CD4-positive, alpha-beta memory T cell (primary cell): ENCODE measurements at regions of chr15 and their contacts with region 1.

Region 1: GRCh38 chr15:60507596-60508424 is 28.9 kb upstream of the ICE2 start:
- DNase-seq: peak; percentile 66 to 79 (median 78)
- H3K4me3 ChIP-seq: no peak overlapping the region
- H3K4me3 Mint-ChIP-seq: peak overlapping the region in 6 of 8 donors; percentile 0 to 67 (median 28)
- H3K27ac ChIP-seq: peak overlapping the region; percentile 21
- H3K27ac Mint-ChIP-seq: peak overlapping the region; percentile 83 to 94 (median 91)
- H3K4me1 ChIP-seq: peaks cover 43% of the 10 kb centered on the region
- H3K4me1 Mint-ChIP-seq: peaks cover 29 to 55% (median 41%) of the 10 kb centered on the region in 4 donors
- H3K27me3 ChIP-seq: no peaks in the 10 kb centered on the region
- H3K27me3 Mint-ChIP-seq: no peaks in the 10 kb centered on the region

Region 2: GRCh38 chr15:59862191-59863155 is 645.3 kb before region 1 on chr15:
- CTCF ChIA-PET with region 1: no interaction called
- POLR2A ChIA-PET with region 1: no interaction called
- intact Hi-C with region 1: no loop called
- DNase-seq: no peak
- H3K4me3 ChIP-seq: no peak overlapping the region
- H3K4me3 Mint-ChIP-seq: no peak overlapping the region
- H3K27ac ChIP-seq: no peak overlapping the region
- H3K27ac Mint-ChIP-seq: no peak overlapping the region
- H3K4me1 ChIP-seq: no peaks in the 10 kb centered on the region
- H3K4me1 Mint-ChIP-seq: peaks cover 0 to 2% (median 0%) of the 10 kb centered on the region in 4 donors
- H3K27me3 ChIP-seq: no peaks in the 10 kb centered on the region
- H3K27me3 Mint-ChIP-seq: peaks cover 8% of the 10 kb centered on the region in 2 donors

Region 3: GRCh38 chr15:60362321-60363086 is 145.3 kb before region 1 on chr15:
- CTCF ChIA-PET with region 1: interaction called, 12 read pairs
- POLR2A ChIA-PET with region 1: no interaction called
- intact Hi-C with region 1: loop called (anchors 5 kb)
- DNase-seq: peak; percentile 3 to 49 (median 22)
- H3K4me3 ChIP-seq: no peak overlapping the region
- H3K4me3 Mint-ChIP-seq: peak overlapping the region in 1 of 8 donors; percentile 49
- H3K27ac ChIP-seq: no peak overlapping the region
- H3K27ac Mint-ChIP-seq: peak overlapping the region; percentile 17 to 87 (median 81)
- H3K4me1 ChIP-seq: peaks cover 25% of the 10 kb centered on the region
- H3K4me1 Mint-ChIP-seq: peaks cover 21 to 39% (median 29%) of the 10 kb centered on the region in 4 donors
- H3K27me3 ChIP-seq: no peaks in the 10 kb centered on the region
- H3K27me3 Mint-ChIP-seq: no peaks in the 10 kb centered on the region

Region 4: GRCh38 chr15:60649845-60650548 is 142.2 kb after region 1 on chr15:
- CTCF ChIA-PET with region 1: no interaction called
- POLR2A ChIA-PET with region 1: no interaction called
- intact Hi-C with region 1: loop called (anchors 5 kb)
- DNase-seq: peak; percentile 73 to 85 (median 81)
- H3K4me3 ChIP-seq: peak overlapping the region in 1 of 2 donors; percentile 46
- H3K4me3 Mint-ChIP-seq: peak overlapping the region; percentile 67 to 92 (median 85)
- H3K27ac ChIP-seq: peak overlapping the region; percentile 66
- H3K27ac Mint-ChIP-seq: peak overlapping the region; percentile 93 to 99 (median 97)
- H3K4me1 ChIP-seq: peaks cover 46% of the 10 kb centered on the region
- H3K4me1 Mint-ChIP-seq: peaks cover 36 to 55% (median 47%) of the 10 kb centered on the region in 4 donors
- H3K27me3 ChIP-seq: no peaks in the 10 kb centered on the region
- H3K27me3 Mint-ChIP-seq: no peaks in the 10 kb centered on the region

Region 5: GRCh38 chr15:60859996-60860494 is 352.2 kb after region 1 on chr15:
- CTCF ChIA-PET with region 1: interaction called, 20 read pairs
- POLR2A ChIA-PET with region 1: interaction called, 3 read pairs
- intact Hi-C with region 1: loop called (anchors 1 kb)
- DNase-seq: no peak
- H3K4me3 ChIP-seq: no peak overlapping the region
- H3K4me3 Mint-ChIP-seq: no peak overlapping the region
- H3K27ac ChIP-seq: no peak overlapping the region
- H3K27ac Mint-ChIP-seq: peak overlapping the region in 1 of 7 donors; percentile 1
- H3K4me1 ChIP-seq: peaks cover 6% of the 10 kb centered on the region
- H3K4me1 Mint-ChIP-seq: peaks cover 22 to 44% (median 33%) of the 10 kb centered on the region in 4 donors
- H3K27me3 ChIP-seq: no peaks in the 10 kb centered on the region
- H3K27me3 Mint-ChIP-seq: no peaks in the 10 kb centered on the region

Region 6: GRCh38 chr15:60916679-60917460 is 409.1 kb after region 1 on chr15:
- CTCF ChIA-PET with region 1: interaction called, 69 read pairs
- POLR2A ChIA-PET with region 1: interaction called, 7 read pairs
- intact Hi-C with region 1: loop called (anchors 1 kb)
- DNase-seq: peak; percentile 85 to 95 (median 88)
- H3K4me3 ChIP-seq: no peak overlapping the region
- H3K4me3 Mint-ChIP-seq: peak overlapping the region in 5 of 8 donors; percentile 18 to 72 (median 57)
- H3K27ac ChIP-seq: peak overlapping the region; percentile 55
- H3K27ac Mint-ChIP-seq: peak overlapping the region; percentile 82 to 98 (median 94)
- H3K4me1 ChIP-seq: peaks cover 12% of the 10 kb centered on the region
- H3K4me1 Mint-ChIP-seq: peaks cover 7 to 17% (median 10%) of the 10 kb centered on the region in 4 donors
- H3K27me3 ChIP-seq: no peaks in the 10 kb centered on the region
- H3K27me3 Mint-ChIP-seq: no peaks in the 10 kb centered on the region